ENCODE measurements at regions of chr19 and their contacts with region 1.

Region 1: GRCh38 chr19:58475714-58476497 is at the start of gene ZNF446:
- DNase-seq: peak; percentile 96 to 99 (median 97)
- H3K4me3 ChIP-seq: peak within 1 kb of the TSS; percentile 69 to 94
- H3K4me3 Mint-ChIP-seq: peak within 1 kb of the TSS; percentile 91 to 98 (median 96)
- H3K27ac ChIP-seq: peak within 1 kb of the TSS; percentile 90
- H3K27ac Mint-ChIP-seq: peak within 1 kb of the TSS; percentile 97 to 100 (median 99)
- H3K4me1 ChIP-seq: peaks cover 17% of the 10 kb centered on the region
- H3K4me1 Mint-ChIP-seq: peaks cover 9 to 33% (median 19%) of the 10 kb centered on the region in 4 donors
- H3K27me3 ChIP-seq: no peaks in the 10 kb centered on the region
- H3K27me3 Mint-ChIP-seq: no peaks in the 10 kb centered on the region
- total RNA-seq, gene ZNF446: 16.4 to 19.5 TPM

Region 2: GRCh38 chr19:58228585-58229254 is 247.2 kb before region 1 on chr19 and contains the start of gene ZNF544:
- CTCF ChIA-PET with region 1: no interaction called
- POLR2A ChIA-PET with region 1: no interaction called
- intact Hi-C with region 1: loop called (anchors 5 kb)
- DNase-seq: peak; percentile 33 to 60 (median 41)
- H3K4me3 ChIP-seq: peak within 1 kb of the TSS; percentile 68 to 70
- H3K4me3 Mint-ChIP-seq: peak within 1 kb of the TSS; percentile 92 to 97 (median 94)
- H3K27ac ChIP-seq: peak within 1 kb of the TSS; percentile 50
- H3K27ac Mint-ChIP-seq: peak within 1 kb of the TSS; percentile 82 to 95 (median 88)
- H3K4me1 ChIP-seq: peaks cover 15% of the 10 kb centered on the region
- H3K4me1 Mint-ChIP-seq: peaks cover 15 to 31% (median 24%) of the 10 kb centered on the region in 4 donors
- H3K27me3 ChIP-seq: no peaks in the 10 kb centered on the region
- H3K27me3 Mint-ChIP-seq: no peaks in the 10 kb centered on the region
- total RNA-seq, gene ZNF544: 63.3 to 67.6 TPM

Region 3: GRCh38 chr19:58305065-58305931 is 170.6 kb before region 1 on chr19 and contains the start of gene ERVK3-1:
- CTCF ChIA-PET with region 1: no interaction called
- POLR2A ChIA-PET with region 1: interaction called, 4 read pairs
- intact Hi-C with region 1: loop called (anchors 1 kb)
- DNase-seq: peak; percentile 93 to 97 (median 95)
- H3K4me3 ChIP-seq: peak within 1 kb of the TSS; percentile 54 to 83
- H3K4me3 Mint-ChIP-seq: peak within 1 kb of the TSS; percentile 97 to 100 (median 100)
- H3K27ac ChIP-seq: peak within 1 kb of the TSS; percentile 95
- H3K27ac Mint-ChIP-seq: peak within 1 kb of the TSS; percentile 97 to 100 (median 99)
- H3K4me1 ChIP-seq: peaks cover 31% of the 10 kb centered on the region
- H3K4me1 Mint-ChIP-seq: peaks cover 34 to 59% (median 45%) of the 10 kb centered on the region in 4 donors
- H3K27me3 ChIP-seq: no peaks in the 10 kb centered on the region
- H3K27me3 Mint-ChIP-seq: no peaks in the 10 kb centered on the region
- total RNA-seq, gene ERVK3-1: 72.3 to 76.6 TPM

Region 4: DNA sequence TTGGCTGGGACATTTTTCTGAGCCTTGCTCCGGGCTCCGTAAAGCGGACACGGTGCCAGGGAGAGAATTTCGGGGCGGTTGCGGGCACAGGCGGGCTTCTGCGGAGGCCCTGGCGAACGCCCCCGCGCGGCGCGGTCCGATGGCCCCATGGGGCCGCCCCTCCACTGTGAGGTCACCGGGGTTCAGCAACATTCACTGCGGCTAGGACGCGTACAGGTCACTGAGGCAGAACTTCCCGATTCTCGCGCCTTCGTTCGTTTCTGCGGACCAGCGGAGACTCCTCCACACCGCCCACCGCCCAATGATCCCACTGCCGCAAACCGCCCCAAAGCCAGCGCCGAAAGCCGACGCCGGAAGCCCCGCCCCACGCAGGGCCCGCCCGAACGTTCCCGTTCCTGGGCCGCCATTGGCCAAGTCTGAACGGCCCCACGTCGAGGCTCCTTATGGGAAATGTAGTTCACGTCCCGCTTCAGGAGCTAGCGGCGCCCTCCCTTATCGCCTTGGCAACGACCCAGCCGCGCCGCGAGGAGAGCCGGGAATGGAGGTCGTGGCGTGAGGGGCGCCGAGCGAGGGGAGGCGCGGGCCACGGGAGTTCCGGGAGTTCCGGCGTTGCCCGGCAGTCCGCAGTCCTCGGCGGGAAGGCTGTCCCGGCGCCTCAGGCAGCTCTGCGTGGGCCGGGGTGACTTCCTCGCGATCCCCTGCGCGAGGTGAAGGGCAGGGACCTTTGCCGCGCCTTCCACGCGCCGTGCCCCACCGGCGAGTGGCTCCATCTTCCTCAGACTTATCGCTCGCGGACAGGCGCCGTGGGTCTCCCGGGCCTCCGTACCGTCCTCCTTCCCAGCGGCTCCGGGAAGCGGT is 67.5 kb before region 1 on chr19 and contains the start of gene ZNF584:
- CTCF ChIA-PET with region 1: no interaction called
- POLR2A ChIA-PET with region 1: no interaction called
- intact Hi-C with region 1: loop called (anchors 1 kb)
- DNase-seq: peak; percentile 93 to 94 (median 93)
- H3K4me3 ChIP-seq: peak within 1 kb of the TSS; percentile 71 to 94
- H3K4me3 Mint-ChIP-seq: peak within 1 kb of the TSS; percentile 92 to 100 (median 96)
- H3K27ac ChIP-seq: peak within 1 kb of the TSS; percentile 77
- H3K27ac Mint-ChIP-seq: peak within 1 kb of the TSS; percentile 91 to 98 (median 95)
- H3K4me1 ChIP-seq: peaks cover 25% of the 10 kb centered on the region
- H3K4me1 Mint-ChIP-seq: peaks cover 21 to 39% (median 33%) of the 10 kb centered on the region in 4 donors
- H3K27me3 ChIP-seq: no peaks in the 10 kb centered on the region
- H3K27me3 Mint-ChIP-seq: no peaks in the 10 kb centered on the region
- total RNA-seq, gene ZNF584: 10.3 to 10.7 TPM

Region 5: GRCh38 chr19:58451358-58452101 is 24.4 kb before region 1 on chr19 and contains the start of gene ZNF324B:
- CTCF ChIA-PET with region 1: no interaction called
- POLR2A ChIA-PET with region 1: interaction called, 8 read pairs
- intact Hi-C with region 1: loop called (anchors 1 kb)
- DNase-seq: peak; percentile 96 to 97 (median 96)
- H3K4me3 ChIP-seq: peak within 1 kb of the TSS; percentile 60 to 69
- H3K4me3 Mint-ChIP-seq: peak within 1 kb of the TSS; percentile 85 to 93 (median 88)
- H3K27ac ChIP-seq: peak within 1 kb of the TSS; percentile 67
- H3K27ac Mint-ChIP-seq: peak within 1 kb of the TSS; percentile 67 to 93 (median 84)
- H3K4me1 ChIP-seq: peaks cover 7% of the 10 kb centered on the region
- H3K4me1 Mint-ChIP-seq: peaks cover 13 to 31% (median 19%) of the 10 kb centered on the region in 4 donors
- H3K27me3 ChIP-seq: no peaks in the 10 kb centered on the region
- H3K27me3 Mint-ChIP-seq: peaks cover 6 to 11% of the 10 kb centered on the region in 2 donors
- total RNA-seq, gene ZNF324B: 13.1 to 13.7 TPM

Region 6: GRCh38 chr19:58519355-58520256 is 43.7 kb after region 1 on chr19 and contains the start of gene ZBTB45:
- CTCF ChIA-PET with region 1: interaction called, 3 read pairs
- POLR2A ChIA-PET with region 1: interaction called, 9 read pairs
- intact Hi-C with region 1: loop called (anchors 5 kb)
- DNase-seq: peak; percentile 88 to 92 (median 89)
- H3K4me3 ChIP-seq: peak within 1 kb of the TSS; percentile 81 to 88
- H3K4me3 Mint-ChIP-seq: peak within 1 kb of the TSS; percentile 92 to 97 (median 95)
- H3K27ac ChIP-seq: peak within 1 kb of the TSS; percentile 82
- H3K27ac Mint-ChIP-seq: peak within 1 kb of the TSS; percentile 97 to 99 (median 98)
- H3K4me1 ChIP-seq: peaks cover 28% of the 10 kb centered on the region
- H3K4me1 Mint-ChIP-seq: peaks cover 14 to 53% (median 30%) of the 10 kb centered on the region in 4 donors
- H3K27me3 ChIP-seq: no peaks in the 10 kb centered on the region
- H3K27me3 Mint-ChIP-seq: no peaks in the 10 kb centered on the region
- total RNA-seq, gene ZBTB45: 19.8 TPM

Region 7: GRCh38 chr19:58572818-58573657 is 97.1 kb after region 1 on chr19 and contains the start of gene MZF1:
- CTCF ChIA-PET with region 1: no interaction called
- POLR2A ChIA-PET with region 1: no interaction called
- intact Hi-C with region 1: loop called (anchors 1 kb)
- DNase-seq: peak; percentile 99 to 100 (median 100)
- H3K4me3 ChIP-seq: peak within 1 kb of the TSS; percentile 67 to 78
- H3K4me3 Mint-ChIP-seq: peak within 1 kb of the TSS; percentile 89 to 99 (median 96)
- H3K27ac ChIP-seq: peak within 1 kb of the TSS; percentile 99
- H3K27ac Mint-ChIP-seq: peak within 1 kb of the TSS; percentile 96 to 100 (median 100)
- H3K4me1 ChIP-seq: peaks cover 29% of the 10 kb centered on the region
- H3K4me1 Mint-ChIP-seq: peaks cover 16 to 44% (median 32%) of the 10 kb centered on the region in 4 donors
- H3K27me3 ChIP-seq: no peaks in the 10 kb centered on the region
- H3K27me3 Mint-ChIP-seq: no peaks in the 10 kb centered on the region
- total RNA-seq, gene MZF1: 42.7 to 44.4 TPM